MCF 10A (cell line): ENCODE measurements at regions of chr1 and their contacts with region 1.

Region 1: DNA sequence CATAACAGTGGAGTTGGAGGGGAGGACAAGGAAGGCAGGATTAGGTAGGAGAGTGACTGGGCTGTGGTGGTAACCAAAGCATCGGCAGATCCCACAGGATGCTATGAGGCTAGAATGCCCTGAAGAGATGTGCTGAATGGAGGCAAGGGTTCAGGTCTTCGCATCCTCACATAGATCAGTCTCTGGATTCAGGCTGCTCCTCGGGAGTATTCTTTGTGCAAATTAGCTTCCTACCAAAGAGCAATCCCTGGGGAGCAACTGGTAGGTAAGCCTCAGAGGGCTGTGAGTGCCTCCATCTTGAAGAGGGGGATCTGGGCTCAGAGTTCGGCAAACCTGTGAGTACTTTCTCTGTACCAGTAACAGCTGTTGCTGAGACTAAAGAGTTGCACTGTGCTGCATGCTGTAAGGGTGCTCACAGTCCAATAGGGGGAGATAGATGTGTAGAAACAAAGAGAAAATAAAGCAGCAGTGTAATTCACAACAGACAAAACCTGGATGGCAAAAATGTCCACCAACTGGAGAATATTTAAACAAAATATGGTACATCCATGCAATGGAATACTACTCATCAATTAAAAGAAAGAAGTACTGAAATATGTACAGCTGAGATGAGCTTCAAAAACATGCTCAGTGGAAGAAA is 322.4 kb upstream of the DEPDC1 start:
- DNase-seq: peak; percentile 35
- H3K4me3 Mint-ChIP-seq: no peak overlapping the region
- H3K27ac Mint-ChIP-seq: no peak overlapping the region
- H3K4me1 Mint-ChIP-seq: no peaks in the 10 kb centered on the region
- H3K27me3 Mint-ChIP-seq: peaks cover 19% of the 10 kb centered on the region
- CTCF ChIP-seq: peak; percentile 31

Region 2: GRCh38 chr1:68600049-68600661 is 219.2 kb before region 1 on chr1:
- CTCF ChIA-PET with region 1: no interaction called
- POLR2A ChIA-PET with region 1: no interaction called
- intact Hi-C with region 1: loop called (anchors 1 kb)
- DNase-seq: peak; percentile 50
- H3K4me3 Mint-ChIP-seq: no peak overlapping the region
- H3K27ac Mint-ChIP-seq: no peak overlapping the region
- H3K4me1 Mint-ChIP-seq: no peaks in the 10 kb centered on the region
- H3K27me3 Mint-ChIP-seq: peaks cover 39% of the 10 kb centered on the region
- CTCF ChIP-seq: peak; percentile 48

Region 3: DNA sequence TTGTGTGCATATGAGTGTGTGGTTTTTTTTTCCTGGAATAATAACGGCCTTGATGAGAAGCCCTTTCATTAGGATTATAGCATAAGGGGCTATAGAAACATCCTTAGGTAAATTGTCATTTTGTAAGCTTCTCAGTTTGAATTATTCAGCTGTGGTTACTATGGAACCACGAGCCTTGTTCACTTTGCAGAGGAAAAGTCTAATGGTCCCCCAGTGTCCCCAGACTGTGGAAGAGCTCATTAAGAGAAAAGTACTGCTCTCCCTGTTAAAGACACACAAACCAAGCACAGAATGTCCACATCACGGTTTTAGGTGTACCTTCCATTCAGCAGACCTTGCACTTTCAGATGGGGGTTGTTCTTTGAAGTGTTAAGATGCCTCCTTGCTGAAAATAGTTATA is 123.1 kb before region 1 on chr1:
- CTCF ChIA-PET with region 1: no interaction called
- POLR2A ChIA-PET with region 1: no interaction called
- intact Hi-C with region 1: no loop called
- DNase-seq: no peak
- H3K4me3 Mint-ChIP-seq: no peak overlapping the region
- H3K27ac Mint-ChIP-seq: no peak overlapping the region
- H3K4me1 Mint-ChIP-seq: no peaks in the 10 kb centered on the region
- H3K27me3 Mint-ChIP-seq: no peaks in the 10 kb centered on the region
- CTCF ChIP-seq: no peak

Region 4: DNA sequence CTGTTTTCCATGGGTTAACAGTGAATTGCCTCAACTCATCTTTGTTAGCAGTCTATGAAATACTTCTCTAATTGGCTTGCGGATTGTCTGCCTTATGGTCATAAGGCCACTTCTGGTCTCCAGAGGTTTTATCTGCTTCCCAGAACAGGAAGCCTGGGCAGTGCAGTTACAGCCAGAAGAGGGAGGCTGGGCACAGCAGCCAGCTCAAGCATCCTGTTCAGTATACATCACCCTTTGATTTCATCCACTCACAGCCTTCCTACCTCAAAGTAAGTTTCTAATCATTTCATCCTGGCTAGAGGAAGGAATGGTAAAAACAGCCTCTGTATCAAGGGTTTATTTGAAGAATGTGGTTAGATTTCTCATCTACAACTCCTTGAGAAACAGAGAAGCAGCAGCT is 11.0 kb before region 1 on chr1:
- CTCF ChIA-PET with region 1: interaction called, 18 read pairs
- POLR2A ChIA-PET with region 1: no interaction called
- intact Hi-C with region 1: no loop called
- DNase-seq: no peak
- H3K4me3 Mint-ChIP-seq: no peak overlapping the region
- H3K27ac Mint-ChIP-seq: no peak overlapping the region
- H3K4me1 Mint-ChIP-seq: no peaks in the 10 kb centered on the region
- H3K27me3 Mint-ChIP-seq: peaks cover 24% of the 10 kb centered on the region
- CTCF ChIP-seq: no peak